KBM-7 (cell line): ENCODE measurements at regions of chr20 and their contacts with region 1.

Region 1: DNA sequence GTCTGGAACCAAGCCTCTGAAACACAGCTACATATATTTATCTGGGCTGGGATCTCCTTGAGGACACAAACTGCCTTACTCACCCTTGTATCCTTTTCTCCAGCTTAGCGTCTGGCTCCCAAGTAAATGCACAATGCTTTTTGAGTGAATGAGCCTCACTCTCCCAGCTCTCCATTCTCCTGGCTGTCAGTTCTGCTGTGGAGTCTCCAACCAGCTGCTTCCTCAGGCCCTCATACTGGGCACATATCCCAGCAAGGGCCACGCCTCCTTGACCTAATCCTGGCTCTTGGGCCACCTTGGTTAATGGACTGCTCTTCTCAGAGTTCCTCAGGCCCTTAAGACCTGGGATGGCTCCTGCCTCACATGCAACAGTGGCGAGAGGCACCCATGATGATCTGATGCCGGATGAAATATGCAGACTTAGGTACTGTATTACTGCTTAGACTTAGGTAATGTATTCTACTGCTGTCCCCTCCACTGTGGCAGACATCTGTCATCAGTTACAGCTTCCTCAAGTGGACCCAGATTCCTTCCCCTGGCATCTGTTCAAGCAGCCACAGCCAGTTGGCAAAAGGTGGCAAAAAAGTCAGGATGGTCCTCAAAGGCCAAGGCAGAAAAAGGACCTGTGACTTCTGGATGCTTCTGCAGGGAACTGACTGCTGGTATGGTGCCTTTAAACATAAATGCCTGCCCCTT is 16.5 kb downstream of the SNHG17 start:
- DNase-seq: no peak

Region 2: DNA sequence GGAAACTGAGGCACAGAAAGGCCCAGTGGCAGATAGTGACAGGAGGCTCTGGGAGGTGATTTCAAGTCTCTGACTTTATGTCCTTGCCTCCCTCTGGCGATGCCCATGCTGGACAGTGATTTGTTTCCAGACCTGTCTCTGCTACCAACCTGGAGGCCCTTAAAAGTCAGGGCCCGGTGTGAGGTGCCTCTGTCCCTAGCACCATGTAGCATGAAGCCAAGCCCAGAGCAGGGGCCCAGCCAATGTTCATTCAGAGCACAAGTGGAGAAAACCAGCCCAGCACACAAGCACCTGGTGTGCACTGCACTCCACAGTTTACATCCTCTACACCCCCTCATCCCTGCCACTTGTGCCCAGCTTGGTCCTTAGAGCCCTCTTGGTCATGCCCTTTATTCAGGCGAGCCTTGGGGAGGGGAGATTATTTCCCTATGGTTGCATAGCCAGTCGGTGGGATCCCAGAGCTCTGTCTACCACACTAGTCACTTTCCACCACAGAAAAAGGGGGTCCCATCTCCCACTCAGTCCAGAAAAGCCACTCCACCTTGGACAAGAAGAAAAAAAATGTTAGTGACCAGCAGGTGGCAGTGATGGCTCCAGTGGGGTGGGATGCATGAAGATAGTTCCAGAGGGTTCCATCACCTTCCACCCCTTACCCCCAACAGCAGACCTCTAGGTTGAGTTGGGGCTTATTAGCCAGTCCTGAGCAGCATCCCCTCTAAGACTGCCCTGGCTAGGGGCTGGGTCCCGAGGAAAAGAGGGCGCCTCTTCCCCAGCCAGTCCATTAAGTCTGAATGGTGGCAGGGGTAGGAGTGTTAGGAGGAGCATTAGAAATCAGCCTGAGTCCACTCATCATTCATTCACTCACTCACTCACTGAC is 189.0 kb before region 1 on chr20:
- in situ Hi-C with region 1: loop called (anchors 10 kb)
- DNase-seq: peak; percentile 45

Region 3: DNA sequence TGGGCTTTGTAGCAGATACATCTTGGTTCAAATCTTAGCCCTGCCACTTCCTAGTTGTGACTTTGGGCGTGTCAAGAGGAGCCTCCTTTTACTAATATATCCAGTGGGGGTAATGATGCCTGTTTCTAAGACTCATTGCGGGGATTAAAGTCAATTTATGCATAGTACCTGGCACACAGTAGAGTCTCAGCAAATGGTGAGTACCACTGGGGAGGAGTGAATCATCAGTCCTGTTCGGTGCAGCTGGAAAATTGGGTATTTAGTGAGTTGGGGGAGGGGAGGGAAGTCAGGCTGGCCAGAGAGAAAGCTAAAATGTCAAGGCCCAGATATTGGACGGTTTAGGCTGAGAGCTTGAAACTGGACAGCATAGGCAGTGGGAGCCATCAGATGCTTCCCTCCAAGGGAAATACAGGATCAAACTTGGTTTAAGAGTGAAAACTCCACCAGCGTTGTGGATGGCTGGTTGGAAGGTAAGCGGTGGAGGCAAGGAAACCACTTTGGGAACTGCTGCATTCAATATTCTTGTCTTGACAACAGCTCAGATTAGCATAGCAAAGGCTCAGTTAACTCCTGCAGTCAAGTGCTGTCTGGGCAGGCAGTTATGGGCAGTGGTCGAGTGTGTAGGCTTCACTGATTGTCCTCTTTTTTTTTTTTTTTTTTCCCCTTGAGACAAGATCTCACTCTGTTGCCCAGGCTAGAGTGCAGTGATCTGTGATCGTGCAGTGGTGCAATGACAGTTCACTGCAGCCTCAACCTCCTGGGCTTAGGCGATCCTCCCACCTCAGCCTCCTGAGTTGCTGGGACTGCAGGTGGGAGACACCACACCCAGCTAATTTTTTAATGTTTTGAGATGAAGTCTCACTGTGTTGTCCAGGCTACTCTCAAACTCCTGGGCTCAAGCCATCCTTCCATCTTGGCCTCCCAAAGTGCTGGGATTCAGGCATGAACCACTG is 399.7 kb after region 1 on chr20:
- in situ Hi-C with region 1: no loop called
- DNase-seq: no peak